ENCODE measurements at regions of chr1 and their contacts with region 1.

Region 1: GRCh38 chr1:62131093-62131725 is 63.4 kb upstream of the L1TD1 start:
- DNase-seq: peak; percentile 43
- H3K4me3 Mint-ChIP-seq: no peak overlapping the region
- H3K27ac Mint-ChIP-seq: no peak overlapping the region
- H3K4me1 Mint-ChIP-seq: no peaks in the 10 kb centered on the region
- H3K27me3 Mint-ChIP-seq: no peaks in the 10 kb centered on the region

Region 2: DNA sequence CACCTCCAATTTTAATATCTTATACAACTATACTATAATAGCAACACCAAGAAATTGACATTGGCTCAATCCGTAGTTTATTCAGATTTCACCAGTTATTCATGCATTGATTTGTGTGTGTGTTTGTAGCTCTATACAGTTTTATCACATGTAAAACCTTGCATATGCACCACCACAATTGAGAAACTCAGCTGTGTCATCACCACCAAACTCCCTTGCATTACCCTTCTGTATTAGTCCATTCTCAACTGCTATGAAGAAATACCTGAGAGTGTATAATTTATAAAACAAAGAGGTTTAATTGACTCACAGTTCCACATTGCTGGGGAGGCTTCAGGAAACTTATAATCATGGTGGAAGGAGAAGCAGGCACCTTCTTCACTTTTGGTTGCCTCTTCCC is 226.9 kb before region 1 on chr1:
- CTCF ChIA-PET with region 1: no interaction called
- POLR2A ChIA-PET with region 1: no interaction called
- DNase-seq: no peak
- H3K4me3 Mint-ChIP-seq: no peak overlapping the region
- H3K27ac Mint-ChIP-seq: no peak overlapping the region
- H3K4me1 Mint-ChIP-seq: no peaks in the 10 kb centered on the region
- H3K27me3 Mint-ChIP-seq: no peaks in the 10 kb centered on the region

Region 3: DNA sequence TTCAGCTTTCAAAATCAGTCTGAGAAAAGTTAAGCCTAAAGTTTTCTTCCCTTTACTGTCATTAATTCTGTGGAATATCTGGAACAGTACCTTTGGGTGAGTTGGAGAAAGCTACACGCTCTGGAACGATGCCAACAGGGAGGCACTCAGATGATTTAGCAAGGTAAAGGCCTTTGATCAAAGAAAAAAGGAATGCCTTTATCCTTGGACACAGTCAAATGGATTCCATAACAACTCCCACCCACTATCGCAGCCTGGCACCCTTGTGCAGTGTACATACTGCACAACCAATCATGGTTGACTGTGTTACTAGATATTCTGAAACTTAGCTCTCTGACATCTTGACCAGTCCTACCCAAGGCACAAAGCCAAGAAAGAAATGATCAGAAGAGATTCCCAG is 170.2 kb before region 1 on chr1:
- CTCF ChIA-PET with region 1: no interaction called
- POLR2A ChIA-PET with region 1: no interaction called
- DNase-seq: no peak
- H3K4me3 Mint-ChIP-seq: no peak overlapping the region
- H3K27ac Mint-ChIP-seq: no peak overlapping the region
- H3K4me1 Mint-ChIP-seq: no peaks in the 10 kb centered on the region
- H3K27me3 Mint-ChIP-seq: no peaks in the 10 kb centered on the region

Region 4: DNA sequence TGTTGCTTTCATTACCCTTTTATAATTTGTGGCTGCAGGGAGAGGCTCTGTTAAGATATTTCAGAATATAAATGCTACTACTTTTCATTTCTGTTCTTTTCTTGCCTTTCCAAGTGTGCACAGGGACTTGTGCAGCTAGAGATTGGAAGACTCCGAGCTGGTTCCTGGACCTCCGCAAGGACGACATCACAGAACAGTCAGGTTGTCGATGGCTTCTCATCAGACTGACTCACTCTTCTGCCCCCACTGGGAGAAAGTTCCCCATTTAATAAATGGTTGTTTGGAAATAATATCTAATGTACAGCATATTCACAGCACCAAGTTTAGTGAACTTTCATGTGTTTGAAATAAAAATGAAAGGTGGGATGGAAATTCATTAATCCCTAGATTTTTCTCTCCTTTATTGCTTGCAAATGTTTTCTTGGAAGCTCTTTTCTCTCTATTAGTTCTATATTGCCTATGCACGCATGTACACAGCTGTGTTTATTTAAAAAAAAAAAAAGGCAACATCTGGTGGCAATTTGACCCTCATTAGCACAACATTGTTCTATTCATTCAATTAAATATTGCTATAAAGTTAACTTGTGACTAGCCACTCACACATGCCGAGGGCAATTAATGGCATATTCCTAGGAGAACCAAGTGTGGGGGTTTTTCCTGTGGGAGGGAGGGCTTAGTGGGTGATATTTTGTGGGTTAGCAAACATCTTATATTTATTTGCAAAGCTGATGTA is 14.0 kb before region 1 on chr1:
- CTCF ChIA-PET with region 1: interaction called, 12 read pairs
- POLR2A ChIA-PET with region 1: no interaction called
- DNase-seq: no peak
- H3K4me3 Mint-ChIP-seq: no peak overlapping the region
- H3K27ac Mint-ChIP-seq: no peak overlapping the region
- H3K4me1 Mint-ChIP-seq: no peaks in the 10 kb centered on the region
- H3K27me3 Mint-ChIP-seq: no peaks in the 10 kb centered on the region

Region 5: DNA sequence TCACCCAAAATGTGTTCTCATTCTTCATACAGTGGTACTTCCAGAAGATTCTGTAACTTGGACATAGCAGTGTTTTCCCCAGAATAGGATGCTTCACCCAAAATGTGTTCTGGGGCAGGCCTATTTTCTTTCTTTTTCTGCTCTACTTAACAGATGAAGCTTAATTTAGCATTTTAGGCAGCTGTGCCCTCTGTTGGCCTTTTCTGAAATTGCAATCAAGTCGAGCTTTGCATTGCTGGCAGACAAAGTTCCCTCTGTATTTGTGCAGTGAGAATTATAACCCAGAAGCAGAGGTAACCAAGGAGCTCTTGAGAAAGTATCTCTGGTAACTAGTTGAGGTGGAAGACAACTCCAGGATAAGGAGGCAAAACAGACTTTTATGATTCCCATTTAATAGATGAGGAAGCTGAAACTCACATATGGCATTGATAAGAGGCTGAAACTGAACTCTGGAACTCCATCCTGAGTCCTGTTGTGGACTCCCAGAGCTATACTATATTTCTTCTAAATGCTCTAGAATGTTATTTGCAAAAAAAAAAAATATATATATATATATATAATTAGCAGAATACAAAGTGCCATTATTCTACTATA is 13.1 kb after region 1 on chr1:
- CTCF ChIA-PET with region 1: interaction called, 34 read pairs
- POLR2A ChIA-PET with region 1: no interaction called
- DNase-seq: peak; percentile 38
- H3K4me3 Mint-ChIP-seq: no peak overlapping the region
- H3K27ac Mint-ChIP-seq: no peak overlapping the region
- H3K4me1 Mint-ChIP-seq: no peaks in the 10 kb centered on the region
- H3K27me3 Mint-ChIP-seq: no peaks in the 10 kb centered on the region

Measured in activated CD4-positive, alpha-beta memory T cell treated with anti-CD3 and anti-CD28 coated beads, Interleukin-2, amount 10 ng/mL, durations not matched to agents 7 days and 5 days (primary cell).